ENCODE measurements at regions of chr17 and their contacts with region 1.

Region 1: GRCh38 chr17:76121932-76122430 is 18.4 kb upstream of the EXOC7 start:
- DNase-seq: no peak
- H3K4me3 ChIP-seq: no peak overlapping the region
- H3K27ac ChIP-seq: no peak overlapping the region
- H3K4me1 ChIP-seq: no peaks in the 10 kb centered on the region; a peak in 1 of 4 replicates
- H3K27me3 ChIP-seq: no peaks in the 10 kb centered on the region
- CTCF ChIP-seq: no peak
- EP300 ChIP-seq: no peak
- RAD21 ChIP-seq: no peak

Region 2: GRCh38 chr17:76051561-76051960 is 70.4 kb before region 1 on chr17:
- CTCF ChIA-PET with region 1: no interaction called
- POLR2A ChIA-PET with region 1: no interaction called
- DNase-seq: no peak
- H3K4me3 ChIP-seq: no peak overlapping the region
- H3K27ac ChIP-seq: no peak overlapping the region
- H3K4me1 ChIP-seq: no peaks in the 10 kb centered on the region
- H3K27me3 ChIP-seq: no peaks in the 10 kb centered on the region
- CTCF ChIP-seq: no peak
- EP300 ChIP-seq: no peak
- RAD21 ChIP-seq: no peak

Region 3: GRCh38 chr17:76063875-76064546 is 58.0 kb before region 1 on chr17:
- CTCF ChIA-PET with region 1: no interaction called
- POLR2A ChIA-PET with region 1: no interaction called
- DNase-seq: no peak
- H3K4me3 ChIP-seq: no peak overlapping the region
- H3K27ac ChIP-seq: no peak overlapping the region
- H3K4me1 ChIP-seq: no peaks in the 10 kb centered on the region
- H3K27me3 ChIP-seq: no peaks in the 10 kb centered on the region
- CTCF ChIP-seq: no peak
- EP300 ChIP-seq: no peak
- RAD21 ChIP-seq: no peak

Region 4: DNA sequence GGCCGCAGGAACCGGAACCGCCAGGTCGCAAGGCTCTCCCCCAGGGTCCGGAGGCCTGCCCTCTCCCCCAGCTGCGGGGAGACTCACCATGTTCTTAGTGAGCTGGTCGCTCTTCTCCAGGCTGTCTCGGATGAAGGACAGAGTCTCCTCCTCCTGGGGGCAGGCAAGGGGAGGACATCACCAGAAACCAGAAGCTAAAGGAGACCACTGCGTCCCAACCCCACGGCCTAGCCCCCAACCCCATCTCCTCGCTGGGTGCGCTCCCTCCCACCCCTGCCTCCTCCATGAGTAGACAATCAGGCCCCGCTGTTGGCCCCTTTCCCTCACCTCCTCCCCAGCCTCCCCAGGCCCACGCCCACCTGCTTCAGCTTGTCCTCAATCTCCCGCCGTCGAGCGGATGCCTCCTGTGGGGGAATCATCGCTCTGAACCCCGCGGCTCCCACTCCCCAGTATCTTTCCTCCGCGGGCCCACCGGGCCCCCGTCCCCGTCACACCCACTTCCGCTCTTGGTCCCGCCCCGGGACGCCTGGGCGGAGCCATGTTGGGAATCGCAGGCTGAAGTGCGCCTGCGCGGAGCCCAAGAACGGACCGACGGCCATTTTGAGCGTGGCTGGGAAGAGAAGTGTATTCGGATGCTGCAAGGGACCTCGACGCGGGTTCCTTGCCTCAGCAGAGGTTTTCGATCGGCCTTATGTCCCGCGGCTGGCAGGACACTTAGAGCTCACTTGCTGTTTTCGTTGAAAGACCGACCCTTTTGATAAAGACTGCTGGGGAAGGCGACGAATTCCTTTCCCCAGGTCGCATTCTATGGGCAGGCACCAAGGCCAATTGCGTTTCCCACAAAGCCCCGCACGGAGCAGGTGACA is 18.5 kb before region 1 on chr17 and contains the start of gene EXOC7:
- CTCF ChIA-PET with region 1: interaction called, 17 read pairs
- POLR2A ChIA-PET with region 1: interaction called, 3 read pairs
- DNase-seq: peak; percentile 100
- H3K4me3 ChIP-seq: peak within 1 kb of the TSS; percentile 68 to 95
- H3K27ac ChIP-seq: peak within 1 kb of the TSS; percentile 71 to 87
- H3K4me1 ChIP-seq: peaks cover 3 to 15% of the 10 kb centered on the region in 2 experiments; a peak in 2 of 4 replicates
- H3K27me3 ChIP-seq: no peaks in the 10 kb centered on the region
- CTCF ChIP-seq: peak; percentile 13; the same call in 1 of the 2 replicates
- EP300 ChIP-seq: no peak
- RAD21 ChIP-seq: no peak
- polyA plus RNA-seq, gene EXOC7: 129 and 167 TPM in 2 replicates

Region 5: GRCh38 chr17:76111956-76112355 is 10.0 kb before region 1 on chr17:
- CTCF ChIA-PET with region 1: interaction called, 22 read pairs
- POLR2A ChIA-PET with region 1: no interaction called
- DNase-seq: no peak
- H3K4me3 ChIP-seq: no peak overlapping the region
- H3K27ac ChIP-seq: no peak overlapping the region
- H3K4me1 ChIP-seq: no peaks in the 10 kb centered on the region
- H3K27me3 ChIP-seq: no peaks in the 10 kb centered on the region; the same call in 1 of the 2 replicates
- CTCF ChIP-seq: no peak
- EP300 ChIP-seq: no peak
- RAD21 ChIP-seq: no peak

Region 6: GRCh38 chr17:76141212-76142038 is 19.4 kb after region 1 on chr17 and contains the start of gene FOXJ1:
- CTCF ChIA-PET with region 1: interaction called, 119 read pairs
- POLR2A ChIA-PET with region 1: interaction called, 3 read pairs
- DNase-seq: peak; percentile 100
- H3K4me3 ChIP-seq: peak within 1 kb of the TSS; percentile 55 to 63
- H3K27ac ChIP-seq: no peak within 1 kb of the TSS
- H3K4me1 ChIP-seq: peaks cover 0 to 16% of the 10 kb centered on the region in 2 experiments; a peak in 2 of 4 replicates
- H3K27me3 ChIP-seq: peaks cover 20% of the 10 kb centered on the region; the same call in 1 of the 2 replicates
- CTCF ChIP-seq: no peak
- EP300 ChIP-seq: no peak
- RAD21 ChIP-seq: no peak
- polyA plus RNA-seq, gene FOXJ1: not detected in 2 replicates

Region 7: GRCh38 chr17:76264755-76265596 is 143.0 kb after region 1 on chr17 and contains the start of gene UBALD2:
- CTCF ChIA-PET with region 1: interaction called, 15 read pairs
- POLR2A ChIA-PET with region 1: no interaction called
- DNase-seq: peak; percentile 100
- H3K4me3 ChIP-seq: peak within 1 kb of the TSS; percentile 75 to 87
- H3K27ac ChIP-seq: peak within 1 kb of the TSS; percentile 77 to 95
- H3K4me1 ChIP-seq: peaks cover 19 to 22% of the 10 kb centered on the region in 2 experiments; a peak in 3 of 4 replicates
- H3K27me3 ChIP-seq: no peaks in the 10 kb centered on the region
- CTCF ChIP-seq: no peak
- EP300 ChIP-seq: peak; percentile 35 to 64; a peak in 1 of 4 replicates
- RAD21 ChIP-seq: no peak
- polyA plus RNA-seq, gene UBALD2: 16.7 and 27.0 TPM in 2 replicates

Region 8: DNA sequence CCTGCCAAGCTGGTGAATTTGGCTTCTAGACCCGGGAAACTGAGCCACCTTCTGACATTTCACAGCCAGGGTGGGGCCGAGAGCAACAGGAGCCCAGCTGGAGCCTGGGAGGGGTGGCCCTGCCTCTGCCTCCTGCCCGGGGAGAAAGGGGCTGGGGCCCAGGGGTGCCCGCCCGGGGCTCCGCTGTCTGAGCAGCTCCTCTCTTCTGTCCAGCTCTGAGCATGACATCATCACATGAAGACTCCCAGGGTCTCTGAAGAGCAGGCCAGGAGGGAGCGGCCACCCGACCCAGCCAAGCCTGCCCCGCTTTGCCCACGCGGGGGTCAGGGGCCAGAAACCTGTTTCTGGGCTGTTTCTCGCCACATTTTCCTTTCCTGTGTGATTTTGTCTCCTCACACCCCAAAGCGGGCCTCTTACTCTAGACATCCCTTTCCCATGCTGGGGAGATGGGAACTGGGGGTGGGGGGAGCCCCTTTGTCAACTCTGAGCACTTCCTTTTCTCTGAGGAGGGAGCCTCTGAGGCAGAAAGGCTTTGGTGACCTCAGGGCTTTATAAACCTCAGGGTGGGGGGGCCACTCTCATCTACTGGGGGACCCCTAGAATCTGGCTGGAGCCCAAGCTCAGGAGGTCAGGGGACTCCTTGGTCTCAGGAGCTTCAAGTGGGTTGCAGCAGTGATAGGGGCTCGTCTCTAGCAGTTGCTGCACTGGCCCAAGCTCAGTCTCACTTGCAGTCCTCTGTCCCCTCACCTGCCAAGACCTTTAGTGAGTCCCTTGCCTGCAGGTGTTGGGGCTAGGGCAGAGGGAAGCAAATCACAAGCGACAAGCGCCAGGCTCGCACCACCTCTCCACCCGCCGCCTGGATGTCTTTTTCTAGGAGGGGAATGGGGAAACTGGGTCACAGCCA is 150.8 kb after region 1 on chr17:
- CTCF ChIA-PET with region 1: interaction called, 332 read pairs
- POLR2A ChIA-PET with region 1: no interaction called
- DNase-seq: peak; percentile 46
- H3K4me3 ChIP-seq: no peak overlapping the region
- H3K27ac ChIP-seq: no peak overlapping the region
- H3K4me1 ChIP-seq: peaks cover 13 to 14% of the 10 kb centered on the region in 2 experiments; a peak in 1 of 4 replicates
- H3K27me3 ChIP-seq: no peaks in the 10 kb centered on the region
- CTCF ChIP-seq: no peak
- EP300 ChIP-seq: no peak
- RAD21 ChIP-seq: no peak

Region 9: DNA sequence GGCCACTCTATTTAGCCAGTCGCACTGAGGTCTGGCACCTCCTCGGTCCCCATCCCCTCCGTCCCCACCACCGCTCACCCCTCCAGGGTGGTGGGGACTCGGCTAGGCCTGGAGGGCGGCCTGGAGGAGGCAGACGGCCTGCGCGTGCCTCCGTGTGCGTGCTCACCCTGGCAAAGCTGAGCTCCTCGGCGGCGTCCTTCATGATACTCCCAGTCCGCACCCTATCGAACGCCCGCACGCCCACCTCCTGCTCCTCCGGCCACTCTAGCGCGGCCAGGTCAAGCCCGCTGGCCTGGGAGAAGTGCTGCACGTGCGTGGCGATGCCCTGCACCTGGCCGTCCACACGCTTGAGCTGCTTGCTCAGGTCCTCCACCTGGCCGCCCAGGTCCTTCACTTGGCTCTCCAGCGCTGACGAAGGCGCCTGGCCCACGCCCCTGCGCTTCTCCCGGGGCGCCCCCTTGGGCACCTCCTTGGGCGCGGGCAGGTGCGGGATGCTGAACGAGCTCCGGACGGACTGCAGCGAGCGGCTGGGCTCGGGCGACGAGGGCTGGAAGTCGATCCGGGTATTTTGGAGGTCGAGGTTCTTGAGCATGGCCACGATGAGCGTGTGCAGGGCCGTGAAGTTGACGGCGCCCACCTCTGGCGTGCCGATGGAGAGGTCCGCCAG is 185.5 kb after region 1 on chr17:
- CTCF ChIA-PET with region 1: interaction called, 62 read pairs
- POLR2A ChIA-PET with region 1: no interaction called
- DNase-seq: no peak
- H3K4me3 ChIP-seq: no peak overlapping the region
- H3K27ac ChIP-seq: no peak overlapping the region
- H3K4me1 ChIP-seq: no peaks in the 10 kb centered on the region
- H3K27me3 ChIP-seq: no peaks in the 10 kb centered on the region
- CTCF ChIP-seq: no peak
- EP300 ChIP-seq: no peak
- RAD21 ChIP-seq: no peak

Measured in SK-N-SH (cell line).